ENCODE measurements at regions of chr7 and their contacts with region 1.

Region 1: GRCh38 chr7:2863461-2864066 is 19.5 kb upstream of the GNA12 start:
- DNase-seq: peak; percentile 87
- H3K4me3 Mint-ChIP-seq: peak overlapping the region; percentile 49
- H3K27ac Mint-ChIP-seq: peak overlapping the region; percentile 69
- H3K4me1 Mint-ChIP-seq: peaks cover 29% of the 10 kb centered on the region
- H3K27me3 Mint-ChIP-seq: peaks cover 4% of the 10 kb centered on the region

Region 2: DNA sequence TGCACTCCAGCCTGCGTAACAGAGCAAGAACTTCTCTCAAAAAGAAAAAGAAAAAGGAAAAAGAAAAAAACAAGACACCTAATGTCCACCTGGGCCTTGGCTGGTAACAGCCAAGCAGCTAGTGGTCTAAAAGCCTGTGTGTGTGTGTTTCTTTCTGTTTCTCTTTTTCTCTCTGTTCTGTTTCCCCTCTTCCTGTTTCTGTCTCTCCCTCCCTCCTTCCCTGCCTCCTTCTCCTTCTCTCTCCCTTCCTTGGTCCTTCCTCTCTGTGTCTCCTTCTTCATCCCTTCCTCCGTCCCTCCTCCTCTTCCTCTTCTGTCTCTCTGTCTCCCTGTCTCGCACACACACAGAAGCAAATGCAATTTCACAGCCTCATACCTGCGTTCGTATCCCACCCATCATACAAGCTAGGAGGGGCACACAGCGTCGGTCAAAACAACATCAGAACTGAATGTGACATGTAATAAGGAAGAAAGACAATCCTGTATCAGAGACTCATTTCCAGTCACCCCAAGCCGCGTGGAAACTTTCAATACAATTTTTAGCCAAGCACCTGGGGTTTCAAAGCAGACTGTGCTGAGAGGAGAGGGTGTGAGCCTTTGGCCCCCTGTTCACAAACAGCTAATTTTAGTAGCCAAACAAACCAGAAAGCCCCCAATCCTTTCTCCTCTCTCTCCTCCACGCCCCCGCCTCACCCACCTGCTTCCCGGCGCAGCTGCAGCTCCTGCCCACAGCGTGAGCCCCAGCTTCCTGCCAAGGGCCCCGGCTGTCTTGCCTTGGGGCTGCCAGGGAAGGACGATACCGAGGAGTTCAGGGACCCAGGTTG is 30.8 kb after region 1 on chr7:
- CTCF ChIA-PET with region 1: interaction called, 16 read pairs
- POLR2A ChIA-PET with region 1: interaction called, 3 read pairs
- DNase-seq: peak; percentile 67
- H3K4me3 Mint-ChIP-seq: peak overlapping the region; percentile 71
- H3K27ac Mint-ChIP-seq: peak overlapping the region; percentile 77
- H3K4me1 Mint-ChIP-seq: peaks cover 24% of the 10 kb centered on the region
- H3K27me3 Mint-ChIP-seq: peaks cover 2% of the 10 kb centered on the region

Region 3: GRCh38 chr7:2999078-2999500 is 135.5 kb after region 1 on chr7:
- CTCF ChIA-PET with region 1: no interaction called
- POLR2A ChIA-PET with region 1: no interaction called
- DNase-seq: no peak
- H3K4me3 Mint-ChIP-seq: no peak overlapping the region
- H3K27ac Mint-ChIP-seq: no peak overlapping the region
- H3K4me1 Mint-ChIP-seq: peaks cover 6% of the 10 kb centered on the region
- H3K27me3 Mint-ChIP-seq: no peaks in the 10 kb centered on the region

Region 4: DNA sequence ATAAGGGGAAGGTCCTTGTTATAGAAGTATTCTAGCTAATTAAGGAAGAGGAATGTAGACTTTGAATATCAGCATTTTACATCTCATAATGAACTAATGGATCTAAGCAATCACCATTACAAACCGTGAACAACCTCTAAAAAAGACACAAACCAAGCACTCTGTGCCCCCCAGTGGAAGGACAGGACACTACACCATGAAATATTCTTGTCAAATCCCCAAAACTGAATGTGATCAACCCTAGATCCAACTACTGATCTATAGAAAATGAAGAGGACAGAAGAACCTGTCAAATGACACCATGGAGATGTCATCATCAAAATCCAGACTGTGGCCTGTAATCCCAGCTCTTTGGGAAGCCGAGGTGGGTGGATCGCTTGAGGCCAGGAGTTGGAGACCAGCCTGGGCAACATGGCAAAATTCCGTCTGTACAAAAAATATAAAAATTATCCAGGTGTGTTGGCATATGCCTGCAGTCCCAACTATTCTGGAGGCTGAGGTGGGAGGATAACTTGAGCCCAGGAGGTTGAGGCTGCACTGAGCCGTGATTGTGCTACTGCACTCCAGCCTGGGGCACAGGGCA is 291.4 kb after region 1 on chr7:
- CTCF ChIA-PET with region 1: interaction called, 11 read pairs
- POLR2A ChIA-PET with region 1: no interaction called
- DNase-seq: peak; percentile 70
- H3K4me3 Mint-ChIP-seq: no peak overlapping the region
- H3K27ac Mint-ChIP-seq: peak overlapping the region; percentile 23
- H3K4me1 Mint-ChIP-seq: peaks cover 29% of the 10 kb centered on the region
- H3K27me3 Mint-ChIP-seq: peaks cover 17% of the 10 kb centered on the region

Region 5: GRCh38 chr7:3300651-3301378 is 437.3 kb after region 1 on chr7 and contains the start of gene SDK1:
- CTCF ChIA-PET with region 1: interaction called, 10 read pairs
- POLR2A ChIA-PET with region 1: no interaction called
- DNase-seq: peak; percentile 90
- H3K4me3 Mint-ChIP-seq: no peak within 1 kb of the TSS
- H3K27ac Mint-ChIP-seq: no peak within 1 kb of the TSS
- H3K4me1 Mint-ChIP-seq: peaks cover 10% of the 10 kb centered on the region
- H3K27me3 Mint-ChIP-seq: peaks cover 54% of the 10 kb centered on the region
- total RNA-seq, gene SDK1: 0.03 to 0.05 TPM

Region 6: GRCh38 chr7:3673524-3673923 is 810.0 kb after region 1 on chr7:
- CTCF ChIA-PET with region 1: interaction called, 11 read pairs
- POLR2A ChIA-PET with region 1: no interaction called
- DNase-seq: peak; percentile 42
- H3K4me3 Mint-ChIP-seq: no peak overlapping the region
- H3K27ac Mint-ChIP-seq: no peak overlapping the region
- H3K4me1 Mint-ChIP-seq: no peaks in the 10 kb centered on the region
- H3K27me3 Mint-ChIP-seq: peaks cover 2% of the 10 kb centered on the region

Measured in activated CD4-positive, alpha-beta memory T cell treated with anti-CD3 and anti-CD28 coated beads, Interleukin-2, amount 10 ng/mL, durations not matched to agents 7 days and 5 days (primary cell).